Natural killer cell (primary cell): ENCODE measurements at regions of chr3 and their contacts with region 1.

Region 1: DNA sequence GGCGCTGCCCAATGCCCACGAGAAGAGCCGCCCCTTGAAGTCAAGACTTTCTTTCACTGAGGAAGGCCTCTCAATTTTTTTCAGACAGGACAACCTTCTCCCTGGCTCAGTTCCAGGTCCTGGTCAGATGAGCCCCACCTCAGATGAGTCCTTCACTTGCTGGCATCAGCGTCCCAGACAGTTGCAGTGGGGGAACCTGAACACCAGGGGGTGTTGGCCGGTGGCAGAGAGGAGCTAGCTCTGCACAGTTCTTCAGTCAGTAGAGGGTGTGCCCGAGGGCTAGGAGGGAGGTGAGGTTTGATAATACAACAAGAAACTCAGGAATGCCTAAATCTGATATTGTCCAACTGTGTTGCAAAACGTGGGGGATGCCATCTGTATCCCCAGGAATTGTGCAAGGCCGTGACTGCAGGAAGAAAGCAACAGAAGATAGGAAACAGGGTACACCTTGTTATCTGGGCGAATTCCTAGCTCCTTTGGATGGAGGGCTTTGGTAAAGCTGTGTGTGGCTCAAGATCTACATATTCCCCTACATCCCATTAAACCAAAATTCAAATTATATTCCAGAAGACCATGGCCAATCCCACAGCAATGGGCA is 34.3 kb downstream of the CCR3 start:
- DNase-seq: peak; percentile 62 to 87
- ATAC-seq: peak; percentile 71 to 88 (median 87)
- H3K4me3 ChIP-seq: no peak overlapping the region
- H3K4me3 Mint-ChIP-seq: peak overlapping the region; percentile 78
- H3K27ac ChIP-seq: peak overlapping the region; percentile 8
- H3K27ac Mint-ChIP-seq: peak overlapping the region; percentile 76 to 85
- H3K4me1 ChIP-seq: peaks cover 50% of the 10 kb centered on the region
- H3K4me1 Mint-ChIP-seq: peaks cover 40 to 43% of the 10 kb centered on the region in 2 donors
- H3K27me3 ChIP-seq: no peaks in the 10 kb centered on the region
- H3K27me3 Mint-ChIP-seq: no peaks in the 10 kb centered on the region
- CTCF ChIP-seq: peak; percentile 79

Region 2: DNA sequence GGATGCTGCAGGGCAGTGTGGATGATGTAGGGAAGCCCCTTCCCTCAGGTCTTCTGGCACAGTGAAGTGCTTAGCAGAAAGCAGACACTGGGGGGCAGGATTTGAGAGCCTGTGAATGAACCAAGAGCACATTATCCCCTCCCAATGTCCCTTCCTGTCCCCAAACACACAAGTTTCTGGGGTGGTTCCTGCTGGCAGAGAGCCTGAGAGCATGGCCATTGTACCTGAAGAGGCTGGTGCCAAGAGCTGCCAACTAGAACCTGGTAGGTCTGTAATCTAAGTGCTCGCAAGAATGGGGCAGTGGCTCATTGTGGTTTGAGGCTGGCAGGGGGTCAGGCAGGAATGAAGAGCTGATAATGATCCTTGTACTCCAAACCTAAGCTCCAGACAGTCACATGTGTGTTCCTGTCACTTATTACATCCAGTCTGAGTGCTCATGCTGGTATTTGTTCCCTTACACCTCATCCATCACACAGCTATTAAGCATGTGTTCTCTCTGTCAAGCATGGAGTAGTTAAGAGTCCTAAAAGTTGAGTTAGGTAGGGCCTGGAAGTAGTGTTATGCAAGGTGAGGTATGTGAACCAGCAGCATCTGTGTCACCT is 61.7 kb before region 1 on chr3:
- intact Hi-C with region 1: loop called (anchors 10 kb)
- DNase-seq: peak in 1 of 2 donors; percentile 27
- ATAC-seq: peak in 2 of 3 donors; percentile 40 to 45
- H3K4me3 ChIP-seq: no peak overlapping the region
- H3K4me3 Mint-ChIP-seq: no peak overlapping the region
- H3K27ac ChIP-seq: no peak overlapping the region
- H3K27ac Mint-ChIP-seq: no peak overlapping the region
- H3K4me1 ChIP-seq: peaks cover 31% of the 10 kb centered on the region
- H3K4me1 Mint-ChIP-seq: peaks cover 0 to 7% of the 10 kb centered on the region in 2 donors
- H3K27me3 ChIP-seq: no peaks in the 10 kb centered on the region
- H3K27me3 Mint-ChIP-seq: no peaks in the 10 kb centered on the region
- CTCF ChIP-seq: no peak

Region 3: DNA sequence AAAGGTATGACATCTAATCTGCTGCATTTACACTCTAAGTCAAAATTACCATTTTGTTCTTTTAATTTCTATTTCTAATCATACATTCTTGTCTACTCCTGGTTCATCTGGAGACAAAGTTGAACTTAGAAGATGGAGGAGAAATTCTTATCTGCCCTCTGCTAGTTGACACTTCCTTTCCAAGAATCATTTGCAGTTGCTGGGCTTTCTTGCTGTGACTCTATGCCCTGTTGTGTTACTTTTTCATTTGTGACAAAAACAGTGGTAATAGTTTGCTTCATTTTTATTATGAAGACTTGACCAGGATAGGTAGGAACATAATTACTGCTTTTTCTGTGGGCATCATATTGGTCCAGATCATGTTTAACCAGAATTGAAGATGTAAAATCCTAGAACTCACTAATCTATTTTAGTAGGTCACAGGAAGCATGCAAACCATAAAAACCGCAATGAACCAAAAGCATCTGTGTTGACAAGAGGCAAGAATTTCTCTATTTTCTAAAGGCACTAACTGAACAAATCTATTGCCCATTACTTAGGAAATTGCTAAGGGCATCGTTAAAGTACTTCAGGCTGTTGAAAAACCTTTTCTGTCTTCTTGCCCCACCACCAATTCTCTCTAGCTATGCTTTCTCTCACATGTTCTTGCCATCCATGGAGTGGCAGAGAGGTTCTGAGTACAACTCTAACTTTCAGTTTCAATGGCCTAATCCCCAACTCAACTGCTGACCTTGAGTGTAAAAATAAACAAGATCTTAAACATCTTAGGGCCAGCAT is 73.1 kb after region 1 on chr3:
- intact Hi-C with region 1: loop called (anchors 5 kb)
- DNase-seq: peak in 1 of 2 donors; percentile 63
- ATAC-seq: peak; percentile 59 to 72 (median 64)
- H3K4me3 ChIP-seq: no peak overlapping the region
- H3K4me3 Mint-ChIP-seq: peak overlapping the region; percentile 73
- H3K27ac ChIP-seq: peak overlapping the region; percentile 79
- H3K27ac Mint-ChIP-seq: peak overlapping the region; percentile 85 to 86
- H3K4me1 ChIP-seq: peaks cover 45% of the 10 kb centered on the region
- H3K4me1 Mint-ChIP-seq: peaks cover 70 to 71% of the 10 kb centered on the region in 2 donors
- H3K27me3 ChIP-seq: no peaks in the 10 kb centered on the region
- H3K27me3 Mint-ChIP-seq: no peaks in the 10 kb centered on the region
- CTCF ChIP-seq: no peak

Region 4: GRCh38 chr3:46368569-46368968 is 92.0 kb after region 1 on chr3:
- intact Hi-C with region 1: loop called (anchors 1 kb)
- DNase-seq: peak; percentile 52 to 86
- ATAC-seq: peak; percentile 89 to 94 (median 92)
- H3K4me3 ChIP-seq: no peak overlapping the region
- H3K4me3 Mint-ChIP-seq: no peak overlapping the region
- H3K27ac ChIP-seq: peak overlapping the region; percentile 60
- H3K27ac Mint-ChIP-seq: peak overlapping the region in 1 of 2 donors; percentile 69
- H3K4me1 ChIP-seq: peaks cover 45% of the 10 kb centered on the region
- H3K4me1 Mint-ChIP-seq: peaks cover 30 to 44% of the 10 kb centered on the region in 2 donors
- H3K27me3 ChIP-seq: no peaks in the 10 kb centered on the region
- H3K27me3 Mint-ChIP-seq: peaks cover 0 to 5% of the 10 kb centered on the region in 2 donors
- CTCF ChIP-seq: peak; percentile 65

Region 5: GRCh38 chr3:46442576-46443562 is 166.3 kb after region 1 on chr3:
- intact Hi-C with region 1: loop called (anchors 5 kb)
- DNase-seq: peak in 1 of 2 donors; percentile 72
- ATAC-seq: peak; percentile 13 to 54 (median 20)
- H3K4me3 ChIP-seq: no peak overlapping the region
- H3K4me3 Mint-ChIP-seq: no peak overlapping the region
- H3K27ac ChIP-seq: no peak overlapping the region
- H3K27ac Mint-ChIP-seq: no peak overlapping the region
- H3K4me1 ChIP-seq: peaks cover 9% of the 10 kb centered on the region
- H3K4me1 Mint-ChIP-seq: peaks cover 26% of the 10 kb centered on the region in 2 donors
- H3K27me3 ChIP-seq: no peaks in the 10 kb centered on the region
- H3K27me3 Mint-ChIP-seq: peaks cover 0 to 2% of the 10 kb centered on the region in 2 donors
- CTCF ChIP-seq: peak; percentile 69